CD8-positive, alpha-beta memory T cell (primary cell): ENCODE measurements at regions of chr1 and their contacts with region 1.

Region 1: GRCh38 chr1:117674521-117675397 is 68.9 kb downstream of the TENT5C start:
- DNase-seq: peak; percentile 25 to 75 (median 62)
- H3K4me3 ChIP-seq: no peak overlapping the region
- H3K4me3 Mint-ChIP-seq: peak overlapping the region in 1 of 7 donors; percentile 24
- H3K27ac ChIP-seq: no peak overlapping the region
- H3K27ac Mint-ChIP-seq: peak overlapping the region in 5 of 8 donors; percentile 42 to 95 (median 83)
- H3K4me1 ChIP-seq: peaks cover 5% of the 10 kb centered on the region
- H3K4me1 Mint-ChIP-seq: peaks cover 9 to 15% (median 10%) of the 10 kb centered on the region in 3 donors
- H3K27me3 ChIP-seq: no peaks in the 10 kb centered on the region
- H3K27me3 Mint-ChIP-seq: peaks cover 0 to 2% of the 10 kb centered on the region in 2 donors

Region 2: GRCh38 chr1:117512743-117513321 is 161.9 kb before region 1 on chr1:
- CTCF ChIA-PET with region 1: interaction called, 23 read pairs
- POLR2A ChIA-PET with region 1: no interaction called
- DNase-seq: peak in 2 of 5 donors; percentile 10 to 13
- H3K4me3 ChIP-seq: no peak overlapping the region
- H3K4me3 Mint-ChIP-seq: no peak overlapping the region
- H3K27ac ChIP-seq: no peak overlapping the region
- H3K27ac Mint-ChIP-seq: no peak overlapping the region
- H3K4me1 ChIP-seq: no peaks in the 10 kb centered on the region
- H3K4me1 Mint-ChIP-seq: no peaks in the 10 kb centered on the region
- H3K27me3 ChIP-seq: no peaks in the 10 kb centered on the region
- H3K27me3 Mint-ChIP-seq: no peaks in the 10 kb centered on the region

Region 3: GRCh38 chr1:117534995-117535467 is 139.7 kb before region 1 on chr1:
- CTCF ChIA-PET with region 1: interaction called, 95 read pairs
- POLR2A ChIA-PET with region 1: no interaction called
- DNase-seq: peak in 4 of 5 donors; percentile 5 to 61 (median 54)
- H3K4me3 ChIP-seq: no peak overlapping the region
- H3K4me3 Mint-ChIP-seq: no peak overlapping the region
- H3K27ac ChIP-seq: no peak overlapping the region
- H3K27ac Mint-ChIP-seq: peak overlapping the region in 2 of 8 donors; percentile 9 to 26
- H3K4me1 ChIP-seq: peaks cover 20% of the 10 kb centered on the region
- H3K4me1 Mint-ChIP-seq: peaks cover 0 to 4% (median 0%) of the 10 kb centered on the region in 3 donors
- H3K27me3 ChIP-seq: no peaks in the 10 kb centered on the region
- H3K27me3 Mint-ChIP-seq: no peaks in the 10 kb centered on the region

Region 4: GRCh38 chr1:117605774-117606648 is 68.7 kb before region 1 on chr1 and contains the start of gene TENT5C:
- CTCF ChIA-PET with region 1: interaction called, 26 read pairs
- POLR2A ChIA-PET with region 1: interaction called, 16 read pairs
- DNase-seq: peak; percentile 98 to 99 (median 99)
- H3K4me3 ChIP-seq: peak within 1 kb of the TSS; percentile 93
- H3K4me3 Mint-ChIP-seq: peak within 1 kb of the TSS; percentile 91 to 99 (median 98)
- H3K27ac ChIP-seq: peak within 1 kb of the TSS; percentile 96
- H3K27ac Mint-ChIP-seq: peak within 1 kb of the TSS; percentile 96 to 100 (median 98)
- H3K4me1 ChIP-seq: peaks cover 36% of the 10 kb centered on the region
- H3K4me1 Mint-ChIP-seq: peaks cover 45 to 53% (median 51%) of the 10 kb centered on the region in 3 donors
- H3K27me3 ChIP-seq: no peaks in the 10 kb centered on the region
- H3K27me3 Mint-ChIP-seq: peaks cover 0 to 8% of the 10 kb centered on the region in 2 donors
- total RNA-seq, gene TENT5C: 3.7 to 4.1 TPM

Region 5: GRCh38 chr1:117654493-117655219 is 20.1 kb before region 1 on chr1:
- CTCF ChIA-PET with region 1: interaction called, 43 read pairs
- POLR2A ChIA-PET with region 1: interaction called, 4 read pairs
- DNase-seq: peak in 1 of 5 donors; percentile 43
- H3K4me3 ChIP-seq: peak overlapping the region; percentile 3
- H3K4me3 Mint-ChIP-seq: peak overlapping the region; percentile 29 to 87 (median 73)
- H3K27ac ChIP-seq: peak overlapping the region; percentile 22
- H3K27ac Mint-ChIP-seq: peak overlapping the region; percentile 78 to 98 (median 97)
- H3K4me1 ChIP-seq: peaks cover 91% of the 10 kb centered on the region
- H3K4me1 Mint-ChIP-seq: peaks cover 86 to 93% (median 91%) of the 10 kb centered on the region in 3 donors
- H3K27me3 ChIP-seq: no peaks in the 10 kb centered on the region
- H3K27me3 Mint-ChIP-seq: peaks cover 0 to 4% of the 10 kb centered on the region in 2 donors

Region 6: DNA sequence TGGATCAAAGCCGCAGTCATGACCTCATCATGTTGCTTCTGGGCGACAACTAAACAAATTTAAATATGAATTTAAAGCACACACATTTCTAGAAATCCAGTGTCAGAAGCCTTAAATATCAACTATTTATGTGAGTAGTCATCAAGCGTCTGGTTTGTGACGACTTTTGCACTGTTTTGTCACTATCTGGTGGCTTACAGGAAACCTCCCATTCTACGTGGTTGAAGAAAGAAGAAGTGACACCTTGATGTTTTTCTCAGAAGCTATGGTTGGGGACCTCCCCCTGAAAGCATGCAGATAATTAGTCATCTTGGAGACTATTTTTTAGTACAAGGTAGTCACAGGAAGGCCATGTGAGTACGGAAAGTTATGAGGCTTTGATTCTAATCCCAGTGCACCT is 10.4 kb before region 1 on chr1:
- CTCF ChIA-PET with region 1: interaction called, 18 read pairs
- POLR2A ChIA-PET with region 1: interaction called, 7 read pairs
- DNase-seq: peak in 4 of 5 donors; percentile 43 to 90 (median 84)
- H3K4me3 ChIP-seq: no peak overlapping the region
- H3K4me3 Mint-ChIP-seq: peak overlapping the region; percentile 12 to 75 (median 59)
- H3K27ac ChIP-seq: peak overlapping the region; percentile 62
- H3K27ac Mint-ChIP-seq: peak overlapping the region; percentile 91 to 99 (median 98)
- H3K4me1 ChIP-seq: peaks cover 62% of the 10 kb centered on the region
- H3K4me1 Mint-ChIP-seq: peaks cover 75 to 88% (median 83%) of the 10 kb centered on the region in 3 donors
- H3K27me3 ChIP-seq: no peaks in the 10 kb centered on the region
- H3K27me3 Mint-ChIP-seq: peaks cover 0 to 2% of the 10 kb centered on the region in 2 donors

Region 7: DNA sequence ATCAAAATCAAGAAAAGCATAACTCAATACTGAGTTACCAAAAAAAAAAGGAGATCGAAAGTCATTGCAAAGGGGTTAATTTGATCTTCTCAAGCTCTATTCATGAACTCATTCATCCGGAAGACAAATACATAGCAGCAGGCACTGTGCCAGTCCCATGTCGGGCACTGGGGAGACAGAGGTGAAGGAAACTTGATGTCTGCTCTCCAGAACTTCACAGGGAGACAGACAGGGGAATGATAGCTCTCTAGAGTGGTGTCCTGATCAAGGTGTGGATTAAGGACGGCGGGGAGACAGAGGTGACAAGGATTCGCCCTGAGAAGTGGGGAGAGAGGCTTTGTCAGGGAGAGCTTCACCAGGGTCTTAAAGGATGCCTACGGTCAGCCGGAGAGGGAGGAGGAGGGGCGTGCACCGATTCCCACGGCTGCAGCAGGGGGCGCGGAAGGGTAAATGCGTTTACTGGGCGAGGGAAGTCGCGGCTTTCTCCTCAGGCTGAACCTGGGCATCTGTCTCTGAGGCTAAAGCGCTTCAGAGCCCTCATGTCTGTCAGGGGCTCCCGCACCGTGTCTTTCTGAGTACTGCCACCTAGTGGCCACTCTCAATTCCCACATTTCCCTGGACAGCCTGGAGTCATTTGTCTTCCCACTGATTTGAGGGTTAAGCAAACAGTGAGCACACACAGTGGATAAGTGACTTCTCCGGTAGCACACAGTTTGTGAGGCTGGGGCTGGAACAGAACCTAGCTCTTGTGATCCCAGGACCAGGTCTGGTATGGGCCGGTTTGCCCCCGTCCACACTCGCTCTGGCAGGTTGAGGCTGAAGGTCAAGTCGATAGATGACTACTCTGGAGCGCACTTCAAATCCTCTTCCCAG is 83.9 kb after region 1 on chr1:
- CTCF ChIA-PET with region 1: interaction called, 16 read pairs
- POLR2A ChIA-PET with region 1: no interaction called
- DNase-seq: peak; percentile 51 to 77 (median 56)
- H3K4me3 ChIP-seq: peak overlapping the region; percentile 66
- H3K4me3 Mint-ChIP-seq: peak overlapping the region; percentile 58 to 88 (median 83)
- H3K27ac ChIP-seq: no peak overlapping the region
- H3K27ac Mint-ChIP-seq: peak overlapping the region in 4 of 8 donors; percentile 5 to 79 (median 38)
- H3K4me1 ChIP-seq: peaks cover 4% of the 10 kb centered on the region
- H3K4me1 Mint-ChIP-seq: peaks cover 7 to 14% (median 9%) of the 10 kb centered on the region in 3 donors
- H3K27me3 ChIP-seq: peaks cover 12% of the 10 kb centered on the region
- H3K27me3 Mint-ChIP-seq: peaks cover 11 to 17% of the 10 kb centered on the region in 2 donors

Region 8: DNA sequence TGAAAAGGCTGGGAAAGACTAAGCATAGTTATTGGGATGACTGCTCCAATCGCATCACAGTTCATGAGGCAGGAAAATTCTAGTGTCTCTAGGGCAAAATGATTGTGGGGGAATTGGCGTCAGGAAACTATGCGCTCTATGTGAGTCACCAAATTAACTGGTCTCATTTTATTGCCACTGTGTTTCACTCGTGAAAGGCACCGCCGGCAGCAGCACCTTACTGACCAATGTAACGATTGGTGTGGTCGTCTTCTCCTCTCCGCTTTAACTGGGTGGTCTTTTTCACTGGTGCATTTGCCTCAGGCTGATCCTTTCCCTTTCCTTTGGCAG is 426.7 kb after region 1 on chr1:
- CTCF ChIA-PET with region 1: no interaction called
- POLR2A ChIA-PET with region 1: no interaction called
- DNase-seq: no peak
- H3K4me3 ChIP-seq: no peak overlapping the region
- H3K4me3 Mint-ChIP-seq: no peak overlapping the region
- H3K27ac ChIP-seq: no peak overlapping the region
- H3K27ac Mint-ChIP-seq: no peak overlapping the region
- H3K4me1 ChIP-seq: no peaks in the 10 kb centered on the region
- H3K4me1 Mint-ChIP-seq: no peaks in the 10 kb centered on the region
- H3K27me3 ChIP-seq: no peaks in the 10 kb centered on the region
- H3K27me3 Mint-ChIP-seq: no peaks in the 10 kb centered on the region